ENCODE measurements at regions of chr1 and their contacts with region 1.

Region 1: GRCh38 chr1:48803474-48803873 is 26.8 kb upstream of the BEND5 start:
- DNase-seq: no peak
- ATAC-seq: no peak
- H3K4me3 Mint-ChIP-seq: no peak overlapping the region
- H3K27ac Mint-ChIP-seq: no peak overlapping the region
- H3K4me1 Mint-ChIP-seq: no peaks in the 10 kb centered on the region
- H3K27me3 Mint-ChIP-seq: peaks cover 13% of the 10 kb centered on the region

Region 2: GRCh38 chr1:48817505-48818114 is 14.1 kb after region 1 on chr1:
- CTCF ChIA-PET with region 1: interaction called, 11 read pairs
- POLR2A ChIA-PET with region 1: no interaction called
- intact Hi-C with region 1: no loop called
- DNase-seq: peak; percentile 66
- ATAC-seq: peak; percentile 58
- H3K4me3 Mint-ChIP-seq: no peak overlapping the region
- H3K27ac Mint-ChIP-seq: no peak overlapping the region
- H3K4me1 Mint-ChIP-seq: no peaks in the 10 kb centered on the region
- H3K27me3 Mint-ChIP-seq: peaks cover 6% of the 10 kb centered on the region

Measured in activated CD4-positive, alpha-beta T cell treated with anti-CD3 and anti-CD28 coated beads for 36 hours (primary cell).